HCT116 (cell line): ENCODE measurements at regions of chr11 and their contacts with region 1.

Region 1: DNA sequence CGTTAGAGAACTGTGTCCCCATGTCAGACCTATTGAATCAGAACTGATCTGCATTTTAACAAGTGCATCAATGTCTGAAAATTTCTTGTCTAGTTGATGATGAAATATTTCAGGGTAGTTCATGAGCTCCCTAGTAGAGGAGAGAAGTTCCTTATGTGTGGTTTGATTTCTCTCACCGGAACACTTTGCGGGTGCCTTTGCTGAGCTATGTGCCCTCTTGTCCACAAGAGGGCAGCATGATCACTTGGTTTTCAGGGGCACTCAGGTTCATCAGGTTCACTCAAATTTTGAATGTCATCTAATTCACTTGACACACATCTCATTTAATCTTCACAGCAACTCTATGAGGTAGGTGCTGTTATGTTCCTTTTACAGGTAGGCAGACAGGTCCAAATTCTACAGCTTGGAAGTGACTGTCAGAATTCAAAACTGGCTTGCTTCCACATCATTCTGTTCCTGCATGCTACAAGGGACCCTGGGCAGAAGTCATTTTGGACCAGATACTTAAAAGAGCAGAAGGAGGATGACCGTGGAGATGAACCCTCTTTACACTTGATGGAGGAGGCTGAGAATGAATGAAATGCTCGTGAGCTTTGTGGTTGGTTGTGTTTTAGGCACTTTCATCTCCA is 55.6 kb downstream of the P4HA3 start:
- DNase-seq: peak; percentile 29
- ATAC-seq: peak; percentile 77
- H3K4me3 ChIP-seq: no peak overlapping the region
- H3K27ac ChIP-seq: no peak overlapping the region
- H3K4me1 ChIP-seq: no peaks in the 10 kb centered on the region
- H3K27me3 ChIP-seq: no peaks in the 10 kb centered on the region
- CTCF ChIP-seq: peak; percentile 83 to 97 (median 93)
- POLR2A ChIP-seq: no peak
- RAD21 ChIP-seq: peak; percentile 87

Region 2: DNA sequence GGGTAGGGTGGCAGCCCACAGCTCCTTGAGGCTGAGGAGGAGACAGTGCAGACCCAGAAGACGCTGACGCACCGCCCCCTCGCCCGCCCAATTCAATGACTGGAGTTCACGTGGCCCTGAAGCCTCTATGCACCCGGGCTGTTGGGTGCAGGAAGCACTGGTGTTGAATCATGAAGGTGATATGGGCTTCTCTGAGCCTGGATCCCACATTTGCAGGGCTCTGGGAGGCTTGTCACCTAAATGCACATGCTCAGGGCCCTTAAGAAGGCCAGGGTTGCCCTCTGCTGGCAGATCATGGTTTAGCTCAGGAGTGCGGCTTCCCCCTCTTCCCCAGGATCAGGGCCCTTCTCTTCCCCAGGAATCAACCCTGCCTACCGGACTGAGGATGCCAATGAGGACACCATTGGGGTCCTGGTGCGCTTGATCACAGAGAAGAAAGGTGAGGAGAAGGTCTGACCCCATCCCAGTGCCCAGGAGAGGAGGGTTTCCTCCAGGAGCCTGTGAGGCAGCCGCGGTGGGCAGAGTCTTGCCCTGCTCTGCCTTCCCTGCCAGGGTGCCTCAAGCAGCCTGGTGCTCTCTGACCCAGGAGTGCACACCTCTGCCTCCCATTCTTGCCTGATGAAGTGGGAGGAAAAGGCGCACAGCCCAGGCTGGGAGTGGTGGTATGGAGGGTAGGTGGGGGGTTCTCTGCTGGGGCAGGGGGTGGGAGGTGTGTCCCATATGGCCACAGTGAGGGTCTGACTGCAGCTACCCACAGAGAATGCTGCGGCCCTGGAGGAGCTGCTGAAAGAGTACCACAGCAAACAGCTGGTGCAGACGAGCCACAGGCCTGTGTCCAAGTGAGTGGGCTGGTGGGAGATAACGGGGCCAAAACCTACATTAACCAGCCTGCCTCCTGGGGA is 862.1 kb before region 1 on chr11:
- CTCF ChIA-PET with region 1: no interaction called
- POLR2A ChIA-PET with region 1: no interaction called
- RAD21 ChIA-PET with region 1: no interaction called
- intact Hi-C with region 1: no loop called
- DNase-seq: peak; percentile 41
- ATAC-seq: peak; percentile 90
- H3K4me3 ChIP-seq: no peak overlapping the region
- H3K27ac ChIP-seq: no peak overlapping the region
- H3K4me1 ChIP-seq: peaks cover 0 to 5% of the 10 kb centered on the region in 2 experiments; a peak in 1 of 4 replicates
- H3K27me3 ChIP-seq: no peaks in the 10 kb centered on the region
- CTCF ChIP-seq: peak; percentile 80 to 81 (median 80)
- POLR2A ChIP-seq: no peak
- RAD21 ChIP-seq: peak; percentile 87

Region 3: DNA sequence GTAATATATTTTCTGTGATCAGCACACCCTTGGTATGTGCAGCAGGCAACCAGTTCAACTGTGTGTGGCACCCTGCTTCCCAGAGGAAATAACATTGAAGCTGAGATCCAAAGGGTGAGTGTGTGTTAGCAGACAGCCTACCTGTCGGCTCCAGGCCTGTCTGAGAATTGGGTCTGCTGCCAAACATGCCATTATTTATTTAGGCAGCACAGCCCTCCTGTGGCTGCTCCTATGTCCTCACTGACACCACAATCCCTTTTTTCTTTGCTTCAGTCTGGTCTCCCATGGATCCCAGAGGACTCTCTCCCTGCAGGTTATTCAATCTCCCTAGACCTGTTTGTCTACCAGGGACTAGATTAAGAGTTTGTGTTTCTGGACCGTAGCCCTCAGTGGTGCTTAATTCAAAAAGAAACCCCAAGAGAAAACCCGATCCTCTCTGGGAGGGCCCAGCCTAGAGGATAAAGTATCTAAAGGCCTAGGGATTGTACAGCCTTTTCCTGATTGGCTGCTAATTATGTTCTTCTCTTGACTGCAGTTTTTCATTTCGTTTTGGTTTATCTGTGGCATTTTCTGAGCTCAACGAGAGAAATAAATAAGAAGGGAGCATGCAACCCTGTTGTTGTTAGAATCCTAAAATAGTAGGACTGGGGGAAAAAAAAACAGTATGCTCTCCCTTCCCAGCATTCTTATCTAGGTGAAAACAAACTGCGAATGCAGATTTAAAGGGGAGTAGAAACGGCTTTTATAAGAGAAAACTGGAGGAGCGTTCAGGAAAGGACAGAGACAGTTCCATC is 187.4 kb after region 1 on chr11:
- CTCF ChIA-PET with region 1: interaction called, 11 read pairs
- POLR2A ChIA-PET with region 1: no interaction called
- RAD21 ChIA-PET with region 1: interaction called in 1 of 2 experiments, 4 read pairs
- intact Hi-C with region 1: no loop called
- DNase-seq: peak; percentile 19
- ATAC-seq: peak; percentile 68
- H3K4me3 ChIP-seq: no peak overlapping the region
- H3K27ac ChIP-seq: no peak overlapping the region
- H3K4me1 ChIP-seq: 0 out of 4 replicates have a peak, but pooled peaks cover 0 to 8% of the 10 kb centered on the region in 2 experiments
- H3K27me3 ChIP-seq: no peaks in the 10 kb centered on the region
- CTCF ChIP-seq: peak; percentile 14 to 53 (median 32); a peak in 4 of 6 replicates
- POLR2A ChIP-seq: no peak
- RAD21 ChIP-seq: peak; percentile 77

Region 4: GRCh38 chr11:74449369-74449931 is 193.6 kb after region 1 on chr11:
- CTCF ChIA-PET with region 1: interaction called, 120 read pairs
- POLR2A ChIA-PET with region 1: no interaction called
- RAD21 ChIA-PET with region 1: interaction called, 15 to 17 read pairs
- intact Hi-C with region 1: loop called (anchors 1 kb)
- DNase-seq: peak; percentile 57
- ATAC-seq: peak; percentile 82
- H3K4me3 ChIP-seq: no peak overlapping the region
- H3K27ac ChIP-seq: no peak overlapping the region
- H3K4me1 ChIP-seq: peaks cover 0 to 3% of the 10 kb centered on the region in 2 experiments; a peak in 1 of 4 replicates
- H3K27me3 ChIP-seq: no peaks in the 10 kb centered on the region
- CTCF ChIP-seq: peak; percentile 68 to 79 (median 74)
- POLR2A ChIP-seq: no peak
- RAD21 ChIP-seq: peak; percentile 96

Region 5: GRCh38 chr11:74570266-74571061 is 314.6 kb after region 1 on chr11:
- CTCF ChIA-PET with region 1: interaction called, 27 read pairs
- POLR2A ChIA-PET with region 1: no interaction called
- RAD21 ChIA-PET with region 1: interaction called in 1 of 2 experiments, 4 read pairs
- intact Hi-C with region 1: loop called (anchors 1 kb)
- DNase-seq: peak; percentile 48
- ATAC-seq: peak; percentile 95
- H3K4me3 ChIP-seq: no peak overlapping the region
- H3K27ac ChIP-seq: no peak overlapping the region
- H3K4me1 ChIP-seq: no peaks in the 10 kb centered on the region
- H3K27me3 ChIP-seq: no peaks in the 10 kb centered on the region
- CTCF ChIP-seq: peak; percentile 70 to 95 (median 88)
- POLR2A ChIP-seq: no peak
- RAD21 ChIP-seq: peak; percentile 94